Activated CD8-positive, alpha-beta T cell treated with anti-CD3 and anti-CD28 coated beads for 36 hours (primary cell): ENCODE measurements at regions of chr2 and their contacts with region 1.

Region 1: GRCh38 chr2:168118733-168119514 is 128.5 kb downstream of the STK39 start:
- DNase-seq: peak; percentile 7
- ATAC-seq: peak; percentile 42
- H3K4me3 Mint-ChIP-seq: no peak overlapping the region
- H3K27ac Mint-ChIP-seq: no peak overlapping the region
- H3K4me1 Mint-ChIP-seq: no peaks in the 10 kb centered on the region
- H3K27me3 Mint-ChIP-seq: no peaks in the 10 kb centered on the region
- CTCF ChIP-seq: peak; percentile 58

Region 2: DNA sequence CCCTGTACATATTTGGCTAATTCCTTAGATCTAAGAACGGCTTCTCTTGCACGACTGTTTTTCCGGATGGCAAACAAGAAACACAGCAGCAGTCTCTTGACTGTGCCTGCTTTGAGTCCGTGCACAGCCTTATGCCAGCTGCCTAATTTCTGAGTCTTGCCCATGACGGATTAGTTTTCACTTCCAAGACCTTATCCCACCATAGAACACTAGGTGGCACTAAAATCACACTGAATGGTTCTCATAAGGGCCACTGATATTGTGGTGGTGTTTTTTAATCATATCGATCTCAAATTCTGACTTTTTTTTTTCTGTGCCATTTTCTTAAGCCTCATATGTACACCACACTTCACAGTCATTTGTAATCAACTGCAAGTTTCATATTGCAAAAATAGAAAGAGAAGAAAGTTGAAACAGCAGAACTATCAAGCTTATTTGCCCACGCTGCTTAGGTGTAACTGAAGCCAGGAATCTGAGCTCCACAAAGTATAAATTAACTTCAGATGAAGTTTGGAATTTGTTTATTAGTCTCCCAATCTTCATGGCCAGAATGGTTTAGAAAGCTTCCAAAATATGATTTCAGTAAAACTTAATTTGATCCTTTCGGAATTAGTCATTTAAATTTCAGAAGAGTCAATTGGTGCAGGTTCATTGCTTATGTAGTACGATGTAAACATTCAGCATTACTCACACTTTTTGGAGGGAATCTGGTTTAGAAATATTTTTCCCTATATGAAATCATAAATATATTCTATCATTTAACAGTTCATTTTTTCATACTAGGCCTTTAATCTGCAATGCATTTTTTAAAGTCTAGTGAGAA is 1579.4 kb before region 1 on chr2:
- CTCF ChIA-PET with region 1: interaction called, 8 read pairs
- POLR2A ChIA-PET with region 1: no interaction called
- intact Hi-C with region 1: loop called (anchors 5 kb)
- DNase-seq: peak; percentile 18
- ATAC-seq: peak; percentile 74
- H3K4me3 Mint-ChIP-seq: no peak overlapping the region
- H3K27ac Mint-ChIP-seq: no peak overlapping the region
- H3K4me1 Mint-ChIP-seq: peaks cover 2% of the 10 kb centered on the region
- H3K27me3 Mint-ChIP-seq: no peaks in the 10 kb centered on the region
- CTCF ChIP-seq: peak; percentile 81

Region 3: DNA sequence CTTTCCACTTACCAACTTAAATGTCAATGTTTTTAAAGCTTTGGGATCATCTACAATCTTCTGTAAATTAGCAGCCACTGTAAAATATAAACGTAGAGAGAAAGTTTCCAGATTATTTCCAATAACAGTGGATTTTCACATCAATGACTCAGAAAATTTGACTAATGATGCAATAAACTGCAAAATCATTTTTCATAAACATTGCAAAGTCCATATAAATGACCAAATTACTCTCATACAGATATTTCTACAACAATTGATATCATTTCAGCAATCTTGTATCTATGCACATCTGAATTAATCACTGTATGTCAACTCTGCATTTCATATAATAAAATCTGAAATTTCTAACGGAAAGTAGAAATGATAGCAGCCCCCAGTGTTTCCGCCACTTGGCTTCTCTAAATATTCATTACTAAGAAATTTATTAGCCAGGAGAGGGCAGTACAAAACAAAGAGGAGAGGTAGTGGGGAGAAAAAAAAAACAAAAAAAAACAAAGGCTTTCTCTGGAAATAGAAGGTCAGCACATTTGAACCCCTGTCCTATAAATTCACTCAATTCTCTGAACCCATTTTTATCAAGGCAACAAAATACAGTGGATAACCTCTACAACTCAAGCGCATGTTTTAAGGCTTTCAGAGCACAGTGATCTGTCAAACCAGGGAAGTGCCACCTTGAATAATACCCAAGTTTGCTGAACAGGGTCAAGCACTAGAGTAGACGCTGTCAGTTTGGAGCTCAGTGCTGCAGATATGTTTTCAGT is 154.1 kb before region 1 on chr2:
- CTCF ChIA-PET with region 1: interaction called, 28 read pairs
- POLR2A ChIA-PET with region 1: no interaction called
- intact Hi-C with region 1: loop called (anchors 10 kb)
- DNase-seq: no peak
- ATAC-seq: no peak
- H3K4me3 Mint-ChIP-seq: no peak overlapping the region
- H3K27ac Mint-ChIP-seq: no peak overlapping the region
- H3K4me1 Mint-ChIP-seq: peaks cover 11% of the 10 kb centered on the region
- H3K27me3 Mint-ChIP-seq: no peaks in the 10 kb centered on the region
- CTCF ChIP-seq: no peak

Region 4: DNA sequence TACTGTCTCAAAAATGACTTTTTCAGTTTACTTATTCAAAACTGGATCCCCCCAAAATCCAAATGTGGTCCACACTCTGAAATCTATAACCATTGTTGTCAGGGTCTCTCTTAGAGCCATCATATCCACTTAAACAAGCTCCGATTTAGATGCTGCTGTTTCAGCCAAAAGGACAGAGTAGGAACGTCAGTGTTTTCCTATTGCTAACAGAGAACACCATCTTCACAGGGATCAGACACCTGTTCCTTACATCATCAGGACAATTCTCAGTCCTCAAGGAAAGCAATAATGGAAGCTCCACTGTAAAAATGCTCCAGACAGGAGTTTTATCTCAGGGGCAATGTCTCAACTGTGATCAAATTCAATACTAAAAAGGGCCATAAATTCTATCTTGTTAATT is 26.9 kb before region 1 on chr2:
- CTCF ChIA-PET with region 1: interaction called, 11 read pairs
- POLR2A ChIA-PET with region 1: no interaction called
- intact Hi-C with region 1: no loop called
- DNase-seq: no peak
- ATAC-seq: no peak
- H3K4me3 Mint-ChIP-seq: no peak overlapping the region
- H3K27ac Mint-ChIP-seq: no peak overlapping the region
- H3K4me1 Mint-ChIP-seq: peaks cover 15% of the 10 kb centered on the region
- H3K27me3 Mint-ChIP-seq: no peaks in the 10 kb centered on the region
- CTCF ChIP-seq: no peak

Region 5: DNA sequence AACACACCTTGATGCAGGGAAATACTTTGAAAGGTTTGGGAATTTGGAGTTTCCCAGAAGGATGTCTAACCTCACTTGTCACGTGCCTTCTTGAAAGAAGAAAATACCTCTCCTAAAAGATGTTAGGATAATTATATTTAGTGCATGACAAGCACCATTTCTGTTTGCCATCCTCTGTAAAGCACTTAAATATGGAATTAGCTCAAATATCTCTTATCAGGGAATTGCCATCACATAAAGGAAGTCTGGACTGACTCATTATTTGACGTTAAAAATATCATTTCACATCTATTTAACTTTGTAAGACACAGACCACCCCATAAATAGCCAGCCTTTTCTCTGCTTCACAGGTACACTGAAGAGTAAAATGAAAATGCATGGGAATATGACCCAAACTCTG is 11.6 kb before region 1 on chr2:
- CTCF ChIA-PET with region 1: interaction called, 49 read pairs
- POLR2A ChIA-PET with region 1: interaction called, 3 read pairs
- intact Hi-C with region 1: no loop called
- DNase-seq: no peak
- ATAC-seq: no peak
- H3K4me3 Mint-ChIP-seq: no peak overlapping the region
- H3K27ac Mint-ChIP-seq: no peak overlapping the region
- H3K4me1 Mint-ChIP-seq: no peaks in the 10 kb centered on the region
- H3K27me3 Mint-ChIP-seq: no peaks in the 10 kb centered on the region
- CTCF ChIP-seq: no peak

Region 6: DNA sequence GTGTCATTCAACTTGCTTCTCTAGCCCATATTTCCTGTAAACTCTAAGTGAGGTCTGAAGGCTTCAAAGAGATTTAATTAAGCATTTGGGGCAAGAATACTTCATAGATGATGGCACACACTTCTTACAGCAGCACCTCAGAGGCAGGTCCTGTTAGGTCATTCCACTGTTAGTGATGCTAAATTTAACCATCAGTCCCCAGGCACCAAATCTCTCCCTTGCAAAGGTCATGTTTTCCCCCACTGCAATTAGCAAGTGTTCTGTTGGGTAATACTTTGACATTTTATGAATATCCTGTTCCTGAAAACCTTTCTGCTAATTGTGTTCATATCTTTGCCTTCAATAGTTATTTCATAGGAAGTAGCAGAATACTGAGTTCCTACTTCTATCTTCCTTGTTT is 11.4 kb after region 1 on chr2:
- CTCF ChIA-PET with region 1: interaction called, 45 read pairs
- POLR2A ChIA-PET with region 1: no interaction called
- intact Hi-C with region 1: no loop called
- DNase-seq: no peak
- ATAC-seq: no peak
- H3K4me3 Mint-ChIP-seq: no peak overlapping the region
- H3K27ac Mint-ChIP-seq: no peak overlapping the region
- H3K4me1 Mint-ChIP-seq: peaks cover 5% of the 10 kb centered on the region
- H3K27me3 Mint-ChIP-seq: no peaks in the 10 kb centered on the region
- CTCF ChIP-seq: no peak

Region 7: GRCh38 chr2:168146892-168147810 is 28.2 kb after region 1 on chr2:
- CTCF ChIA-PET with region 1: interaction called, 12 read pairs
- POLR2A ChIA-PET with region 1: no interaction called
- intact Hi-C with region 1: no loop called
- DNase-seq: no peak
- ATAC-seq: no peak
- H3K4me3 Mint-ChIP-seq: no peak overlapping the region
- H3K27ac Mint-ChIP-seq: no peak overlapping the region
- H3K4me1 Mint-ChIP-seq: peaks cover 5% of the 10 kb centered on the region
- H3K27me3 Mint-ChIP-seq: no peaks in the 10 kb centered on the region
- CTCF ChIP-seq: no peak